ENCODE measurements at regions of chr1 and their contacts with region 1.

Region 1: DNA sequence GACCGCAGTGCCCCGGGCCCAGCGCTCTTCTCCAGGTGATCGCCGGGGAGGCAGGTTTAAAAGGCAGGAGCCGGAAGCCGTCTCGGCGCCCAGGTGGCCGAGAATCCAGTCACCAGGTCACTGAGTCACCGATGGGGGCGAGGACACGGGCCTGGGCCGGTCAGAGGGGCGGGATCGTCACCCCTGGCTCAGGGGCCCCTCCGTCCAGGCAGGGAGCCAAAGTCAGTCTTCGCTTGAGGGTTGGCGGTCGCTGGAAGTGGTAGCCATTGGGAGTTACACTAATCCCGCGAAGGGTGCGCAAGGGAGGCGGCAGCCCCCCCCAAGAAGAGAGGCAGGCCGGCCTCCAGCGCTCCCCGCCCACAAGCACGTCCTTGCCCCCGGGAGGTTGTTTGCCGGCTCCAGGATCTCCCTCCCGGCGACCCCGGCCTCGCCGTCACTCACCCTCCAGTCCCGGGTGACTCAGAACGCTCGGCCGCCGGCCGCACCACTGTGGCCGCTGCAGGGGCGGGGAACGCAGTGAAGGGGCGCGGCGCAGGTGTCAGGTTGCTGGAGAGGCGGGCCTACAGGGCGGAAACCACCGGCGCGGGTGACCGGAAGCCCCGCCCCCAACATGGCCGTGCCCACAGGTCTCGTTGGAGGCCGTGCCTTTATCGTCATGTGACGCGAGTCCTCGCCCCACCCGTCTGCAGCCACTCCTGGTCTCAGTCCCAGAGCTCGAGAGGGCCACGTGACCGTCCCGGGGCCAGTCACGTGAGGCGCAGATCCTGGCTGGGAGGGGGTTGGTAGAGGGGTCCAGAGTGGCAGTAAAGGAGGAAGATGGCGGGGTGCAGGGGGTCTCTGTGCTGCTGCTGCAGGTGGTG is at the starts of genes CLCN6 and MTHFR:
- DNase-seq: peak; percentile 99
- H3K4me3 Mint-ChIP-seq: peak within 1 kb of the TSS; percentile 99
- H3K27ac Mint-ChIP-seq: peak within 1 kb of the TSS; percentile 98
- H3K4me1 Mint-ChIP-seq: peaks cover 66% of the 10 kb centered on the region
- H3K27me3 Mint-ChIP-seq: peaks cover 2% of the 10 kb centered on the region
- total RNA-seq, gene CLCN6: 11.2 and 14.3 TPM in 2 replicates
- total RNA-seq, gene MTHFR: 18.1 and 21.4 TPM in 2 replicates

Region 2: DNA sequence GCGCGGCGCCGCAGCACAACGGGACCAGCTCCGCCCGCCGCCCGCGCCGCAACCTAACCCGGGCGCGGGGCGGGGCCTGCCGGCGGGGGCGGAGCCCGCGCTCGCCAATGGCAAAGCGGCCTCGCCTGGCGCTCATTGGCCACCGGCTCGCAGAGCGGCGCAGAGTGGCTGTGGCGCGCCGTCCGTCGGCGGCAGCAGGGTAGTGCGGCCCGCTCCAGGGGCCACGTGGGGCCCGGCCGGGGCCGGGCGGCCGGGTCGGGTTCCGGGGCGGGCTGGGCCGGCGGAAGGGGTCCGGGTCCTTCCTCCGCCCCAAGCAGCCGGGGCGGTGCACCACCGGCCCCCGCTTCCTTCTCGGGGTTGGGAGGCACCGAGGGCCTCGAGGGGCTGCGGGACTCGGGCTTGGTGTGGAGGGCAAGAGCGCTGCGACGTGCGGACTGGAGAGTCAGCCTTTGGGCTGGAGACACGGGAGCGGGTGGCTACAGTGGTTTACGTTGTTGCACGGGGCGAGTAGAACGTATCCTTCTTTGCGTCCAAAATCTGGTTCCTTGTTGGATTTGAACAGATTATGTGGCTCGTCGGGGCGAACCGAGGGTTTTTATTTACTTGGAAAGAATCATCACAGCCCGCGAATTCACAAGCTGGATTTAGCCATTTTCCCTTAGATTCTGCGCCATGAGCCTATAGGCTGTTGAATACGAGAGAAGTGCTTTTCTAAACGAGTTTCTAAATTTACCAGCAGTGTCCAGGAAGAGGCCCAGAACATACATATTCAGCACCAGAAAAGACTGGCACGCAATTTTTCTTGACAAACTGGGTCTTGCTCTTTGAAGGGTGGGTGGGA is 745.5 kb before region 1 on chr1 and contains the start of gene SRM:
- intact Hi-C with region 1: loop called (anchors 5 kb)
- DNase-seq: peak; percentile 94
- H3K4me3 Mint-ChIP-seq: peak within 1 kb of the TSS; percentile 97
- H3K27ac Mint-ChIP-seq: peak within 1 kb of the TSS; percentile 95
- H3K4me1 Mint-ChIP-seq: peaks cover 30% of the 10 kb centered on the region
- H3K27me3 Mint-ChIP-seq: no peaks in the 10 kb centered on the region
- total RNA-seq, gene SRM: 306 and 332 TPM in 2 replicates

Region 3: GRCh38 chr1:11272832-11273594 is 532.7 kb before region 1 on chr1 and contains the start of gene UBIAD1:
- intact Hi-C with region 1: loop called (anchors 2 kb)
- DNase-seq: peak; percentile 75
- H3K4me3 Mint-ChIP-seq: peak within 1 kb of the TSS; percentile 98
- H3K27ac Mint-ChIP-seq: peak within 1 kb of the TSS; percentile 95
- H3K4me1 Mint-ChIP-seq: peaks cover 25% of the 10 kb centered on the region
- H3K27me3 Mint-ChIP-seq: peaks cover 2% of the 10 kb centered on the region
- total RNA-seq, gene UBIAD1: 30.5 and 33.1 TPM in 2 replicates

Region 4: DNA sequence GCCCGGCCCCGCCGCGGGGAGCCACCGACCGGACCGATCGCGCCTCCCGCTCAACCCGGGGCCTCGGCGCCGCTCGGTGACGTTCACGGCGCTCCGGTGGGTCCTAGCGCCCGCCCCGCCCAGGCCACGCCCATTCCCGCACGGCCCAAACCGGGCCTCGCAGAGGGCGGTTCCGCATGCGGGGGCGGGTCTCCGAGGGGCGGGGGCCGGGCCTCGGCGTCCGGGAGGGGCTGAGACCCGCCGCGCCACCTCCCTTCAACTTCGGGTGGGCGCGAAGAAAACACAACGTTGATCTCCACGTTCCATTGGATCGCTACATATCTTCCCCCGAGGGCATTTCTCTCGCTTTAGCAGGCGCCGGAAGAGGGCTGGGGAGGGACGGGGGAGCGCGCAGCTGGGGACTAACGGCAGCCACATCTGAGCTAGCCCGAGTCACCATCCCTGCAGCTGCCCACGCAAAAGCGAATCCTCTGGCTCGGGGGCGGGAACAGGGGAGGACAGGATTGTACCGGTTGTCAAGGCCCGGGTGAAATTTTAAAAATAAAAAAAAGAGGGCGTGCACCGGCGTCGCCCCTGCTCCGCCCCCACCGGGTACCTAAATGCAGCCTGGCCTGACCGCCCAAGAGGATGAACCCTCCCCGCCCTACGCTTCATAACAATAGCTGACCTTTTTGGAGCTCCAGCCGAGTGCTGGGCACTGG is 124.5 kb before region 1 on chr1 and contains the start of gene MAD2L2:
- intact Hi-C with region 1: loop called (anchors 1 kb)
- DNase-seq: peak; percentile 90
- H3K4me3 Mint-ChIP-seq: peak within 1 kb of the TSS; percentile 87
- H3K27ac Mint-ChIP-seq: peak within 1 kb of the TSS; percentile 91
- H3K4me1 Mint-ChIP-seq: peaks cover 18% of the 10 kb centered on the region
- H3K27me3 Mint-ChIP-seq: peaks cover 13% of the 10 kb centered on the region
- total RNA-seq, gene MAD2L2: 76.9 and 81.8 TPM in 2 replicates

Region 5: DNA sequence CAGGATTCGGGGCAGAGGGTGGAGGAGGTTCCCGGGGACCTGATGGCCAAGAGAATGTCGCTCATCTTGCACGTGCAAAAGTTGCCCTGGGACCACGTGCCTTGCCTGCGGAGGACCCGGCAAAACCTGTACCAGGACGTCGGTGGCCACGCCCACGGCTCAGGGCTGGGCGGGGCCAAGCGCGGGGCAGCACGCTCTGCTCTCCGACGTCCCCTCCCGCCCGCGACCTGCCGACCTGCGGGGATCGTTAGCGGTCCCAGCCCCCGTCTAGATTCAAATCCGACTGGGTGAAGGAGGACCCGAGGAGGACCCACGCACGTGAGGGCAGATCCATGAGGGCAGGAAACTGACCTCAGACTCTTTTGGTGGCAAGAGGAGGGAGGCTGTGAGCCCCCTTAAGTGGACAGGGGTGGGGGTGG is 43.7 kb before region 1 on chr1 and contains the start of gene C1orf167:
- intact Hi-C with region 1: loop called (anchors 1 kb)
- DNase-seq: peak; percentile 27
- H3K4me3 Mint-ChIP-seq: no peak within 1 kb of the TSS
- H3K27ac Mint-ChIP-seq: no peak within 1 kb of the TSS
- H3K4me1 Mint-ChIP-seq: no peaks in the 10 kb centered on the region
- H3K27me3 Mint-ChIP-seq: peaks cover 21% of the 10 kb centered on the region
- total RNA-seq, gene C1orf167: not detected in 2 replicates

Region 6: GRCh38 chr1:11925938-11926292 is 120.2 kb after region 1 on chr1:
- intact Hi-C with region 1: loop called (anchors 1 kb)
- DNase-seq: no peak
- H3K4me3 Mint-ChIP-seq: no peak overlapping the region
- H3K27ac Mint-ChIP-seq: no peak overlapping the region
- H3K4me1 Mint-ChIP-seq: peaks cover 26% of the 10 kb centered on the region
- H3K27me3 Mint-ChIP-seq: no peaks in the 10 kb centered on the region

Region 7: GRCh38 chr1:12161662-12162458 is 356.2 kb after region 1 on chr1:
- intact Hi-C with region 1: loop called (anchors 10 kb)
- DNase-seq: peak; percentile 79
- H3K4me3 Mint-ChIP-seq: peak overlapping the region; percentile 69
- H3K27ac Mint-ChIP-seq: peak overlapping the region; percentile 95
- H3K4me1 Mint-ChIP-seq: peaks cover 82% of the 10 kb centered on the region
- H3K27me3 Mint-ChIP-seq: no peaks in the 10 kb centered on the region

Measured in activated T-helper 1 cell treated with anti-CD3 and anti-CD28 coated beads, Interleukin-12 subunit alpha, Interleukin-12 subunit beta, Interleukin-2, Interleukin-4 antibody, amounts not matched to agents 30 ng/mL and 10 ng/mL and 1 ng/mL, durations not matched to agents 14 hours and 24 hours and 36 hours (primary cell).